Adrenal gland (tissue), 19 donors: ENCODE measurements at regions of chr10 and their contacts with region 1.

Region 1: GRCh38 chr10:23994479-23995046 is 214.4 kb upstream of the KIAA1217 start:
- DNase-seq: peak; percentile 55 to 86 (median 77)
- H3K4me3 ChIP-seq: peak overlapping the region in 1 of 4 donors; percentile 26
- H3K27ac ChIP-seq: no peak overlapping the region
- H3K4me1 ChIP-seq: peaks cover 0 to 6% of the 10 kb centered on the region in 2 donors
- H3K27me3 ChIP-seq: no peaks in the 10 kb centered on the region
- CTCF ChIP-seq: peak; percentile 83 to 90 (median 88)
- POLR2A ChIP-seq: no peak

Region 2: DNA sequence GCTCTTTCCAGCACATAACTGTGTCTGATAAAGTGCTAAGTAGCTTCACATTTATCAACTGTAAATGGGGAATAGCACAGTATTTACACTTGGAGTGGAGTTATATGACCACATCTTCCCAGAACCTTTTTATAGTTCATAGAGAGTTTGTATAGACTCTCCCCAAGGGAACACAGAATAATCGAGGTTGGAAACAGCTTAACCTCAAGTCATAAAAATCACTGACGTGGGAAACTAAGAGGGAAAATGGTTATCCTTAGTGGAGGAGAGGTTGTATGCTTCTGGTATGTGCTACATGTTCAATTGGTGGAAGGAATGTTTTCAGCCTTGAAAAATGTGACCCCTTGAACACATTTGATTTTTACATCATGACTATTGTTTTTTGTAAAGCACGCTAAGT is 46.5 kb after region 1 on chr10:
- intact Hi-C with region 1: no loop called
- DNase-seq: no peak
- H3K4me3 ChIP-seq: no peak overlapping the region
- H3K27ac ChIP-seq: no peak overlapping the region
- H3K4me1 ChIP-seq: no peaks in the 10 kb centered on the region
- H3K27me3 ChIP-seq: no peaks in the 10 kb centered on the region
- CTCF ChIP-seq: no peak
- POLR2A ChIP-seq: no peak

Region 3: DNA sequence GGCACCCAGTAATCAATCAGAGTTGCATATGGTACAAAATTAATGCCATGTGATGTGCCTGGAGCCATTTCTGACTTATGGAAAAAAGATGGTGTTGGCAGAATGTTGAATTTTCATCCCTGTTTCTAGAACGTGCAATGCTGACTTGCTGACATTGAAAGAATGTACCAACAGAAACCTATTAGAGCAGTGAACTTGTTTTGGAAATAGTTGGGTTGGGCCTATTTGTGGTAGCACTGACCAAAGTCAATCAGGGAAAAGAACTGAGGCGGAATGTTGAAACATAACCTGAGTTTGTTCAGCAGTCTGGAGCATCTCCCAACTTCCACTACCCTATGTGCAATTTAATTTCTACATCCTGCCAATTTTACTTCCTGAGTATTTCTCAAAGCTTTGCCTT is 202.7 kb after region 1 on chr10:
- intact Hi-C with region 1: loop called in 1 of 2 experiments (anchors 2 kb)
- DNase-seq: no peak
- H3K4me3 ChIP-seq: no peak overlapping the region
- H3K27ac ChIP-seq: no peak overlapping the region
- H3K4me1 ChIP-seq: no peaks in the 10 kb centered on the region
- H3K27me3 ChIP-seq: no peaks in the 10 kb centered on the region
- CTCF ChIP-seq: no peak
- POLR2A ChIP-seq: no peak

Region 4: GRCh38 chr10:24360282-24361127 is 365.9 kb after region 1 on chr10:
- intact Hi-C with region 1: loop called in 1 of 2 experiments (anchors 5 kb)
- DNase-seq: peak; percentile 73 to 94 (median 84)
- H3K4me3 ChIP-seq: no peak overlapping the region
- H3K27ac ChIP-seq: no peak overlapping the region
- H3K4me1 ChIP-seq: peaks cover 0 to 12% of the 10 kb centered on the region in 2 donors
- H3K27me3 ChIP-seq: no peaks in the 10 kb centered on the region
- CTCF ChIP-seq: peak; percentile 65 to 85 (median 75)
- POLR2A ChIP-seq: no peak

Region 5: GRCh38 chr10:24518981-24519597 is 524.5 kb after region 1 on chr10:
- intact Hi-C with region 1: loop called in 1 of 2 experiments (anchors 5 kb)
- DNase-seq: peak; percentile 54 to 85 (median 80)
- H3K4me3 ChIP-seq: no peak overlapping the region
- H3K27ac ChIP-seq: peak overlapping the region in 1 of 5 donors; percentile 11
- H3K4me1 ChIP-seq: peaks cover 0 to 6% of the 10 kb centered on the region in 2 donors
- H3K27me3 ChIP-seq: no peaks in the 10 kb centered on the region
- CTCF ChIP-seq: peak; percentile 62 to 78 (median 68)
- POLR2A ChIP-seq: no peak

Region 6: DNA sequence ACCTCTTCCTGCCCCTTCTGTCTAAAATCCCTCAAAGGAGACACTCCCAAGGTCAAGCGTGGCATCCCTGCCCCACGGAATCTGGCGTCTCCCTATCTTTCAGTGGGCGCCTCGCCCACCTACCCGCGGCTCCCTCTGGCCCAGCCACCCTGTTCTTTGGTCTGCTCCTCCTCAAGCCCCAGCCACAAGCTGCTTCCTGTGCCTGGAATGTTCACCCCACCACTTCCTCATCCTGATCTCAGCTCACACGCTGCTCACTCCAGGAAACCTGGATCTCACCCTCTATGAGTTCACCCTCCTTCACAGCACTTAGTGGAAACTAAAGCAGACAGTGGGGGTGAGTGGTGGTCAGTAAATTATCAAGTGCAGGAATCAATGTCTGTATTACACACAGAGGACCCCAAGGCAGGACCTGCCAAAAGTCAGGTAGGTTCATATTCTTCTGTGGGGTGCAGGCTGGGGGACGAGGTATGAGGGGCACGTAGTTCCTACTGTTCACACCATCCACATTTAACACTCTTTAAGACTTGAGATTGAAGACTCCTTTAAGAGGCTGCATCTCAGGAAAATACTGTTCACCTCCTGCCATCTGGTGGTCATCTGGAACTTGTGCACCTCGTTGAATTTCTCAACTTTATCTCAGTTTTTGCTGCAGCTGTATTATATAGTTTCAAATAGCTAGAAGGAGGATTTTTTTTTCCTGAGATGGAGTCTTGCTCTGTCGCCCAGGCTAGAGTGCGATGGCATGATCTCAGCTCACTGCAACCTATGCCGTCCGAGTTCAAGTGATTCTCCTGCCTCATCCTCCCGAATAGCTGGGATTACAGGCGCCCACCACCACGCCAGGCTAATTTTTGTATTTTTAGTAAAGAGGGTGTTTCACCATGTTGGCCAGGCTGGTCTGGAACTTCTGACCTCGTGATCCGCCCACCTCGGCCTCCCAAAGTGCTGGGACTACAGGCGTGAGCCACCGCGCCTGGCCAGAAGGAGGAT is 562.5 kb after region 1 on chr10:
- intact Hi-C with region 1: loop called in 1 of 2 experiments (anchors 10 kb)
- DNase-seq: peak in 4 of 7 donors; percentile 30 to 61 (median 45)
- H3K4me3 ChIP-seq: no peak overlapping the region
- H3K27ac ChIP-seq: no peak overlapping the region
- H3K4me1 ChIP-seq: peaks cover 0 to 4% of the 10 kb centered on the region in 2 donors
- H3K27me3 ChIP-seq: no peaks in the 10 kb centered on the region
- CTCF ChIP-seq: peak; percentile 46 to 72 (median 69)
- POLR2A ChIP-seq: no peak